ENCODE measurements at regions of chr15 and their contacts with region 1.

Region 1: DNA sequence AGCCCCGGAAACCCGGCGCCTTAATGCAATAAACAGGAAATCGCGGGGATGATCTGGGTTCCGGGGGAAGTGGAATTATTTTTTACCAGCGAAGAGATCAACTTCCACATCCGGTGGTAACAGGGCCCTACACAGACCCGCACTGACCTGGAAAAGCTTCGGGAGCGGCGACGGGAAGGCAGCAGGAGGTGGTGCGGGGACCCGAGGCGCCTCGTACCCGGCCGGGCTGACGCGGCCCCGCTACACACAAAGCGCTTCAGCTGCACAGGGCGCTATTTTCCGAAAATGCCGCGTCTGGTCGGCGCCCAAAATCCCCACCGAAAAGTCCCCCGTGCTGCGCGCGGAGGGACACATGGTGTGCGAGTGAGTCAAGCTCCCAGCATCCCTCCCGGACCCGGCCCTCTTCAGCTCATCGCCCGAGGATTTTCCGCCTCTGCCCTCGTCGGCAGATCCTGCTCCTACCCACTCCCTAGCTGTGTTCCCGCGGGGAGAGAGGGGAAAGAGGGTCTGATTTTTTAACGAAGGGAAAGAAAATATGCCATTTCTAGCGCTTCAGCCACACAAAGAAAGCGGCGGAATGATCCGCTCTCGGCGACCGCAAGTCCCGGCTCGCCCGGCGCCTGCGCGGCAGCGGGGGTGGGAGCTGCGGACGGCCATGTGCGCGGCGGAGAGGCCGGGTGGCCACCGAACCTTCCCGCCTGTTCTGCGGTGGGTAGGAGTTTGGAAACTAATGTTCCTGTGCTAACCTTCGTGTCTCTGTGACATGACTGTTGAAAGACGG is at the start of gene GABPB1:
- DNase-seq: peak; percentile 90
- H3K4me3 Mint-ChIP-seq: peak within 1 kb of the TSS; percentile 94
- H3K27ac Mint-ChIP-seq: peak within 1 kb of the TSS; percentile 98
- H3K4me1 Mint-ChIP-seq: peaks cover 28% of the 10 kb centered on the region
- H3K27me3 Mint-ChIP-seq: no peaks in the 10 kb centered on the region
- CTCF ChIP-seq: no peak
- total RNA-seq, gene GABPB1: 33.4 and 38.5 TPM in 2 replicates

Region 2: GRCh38 chr15:50315814-50316630 is 39.0 kb before region 1 on chr15:
- CTCF ChIA-PET with region 1: no interaction called
- POLR2A ChIA-PET with region 1: interaction called, 10 read pairs
- intact Hi-C with region 1: no loop called
- DNase-seq: peak; percentile 58
- H3K4me3 Mint-ChIP-seq: no peak overlapping the region
- H3K27ac Mint-ChIP-seq: no peak overlapping the region
- H3K4me1 Mint-ChIP-seq: no peaks in the 10 kb centered on the region
- H3K27me3 Mint-ChIP-seq: no peaks in the 10 kb centered on the region
- CTCF ChIP-seq: peak; percentile 59

Region 3: DNA sequence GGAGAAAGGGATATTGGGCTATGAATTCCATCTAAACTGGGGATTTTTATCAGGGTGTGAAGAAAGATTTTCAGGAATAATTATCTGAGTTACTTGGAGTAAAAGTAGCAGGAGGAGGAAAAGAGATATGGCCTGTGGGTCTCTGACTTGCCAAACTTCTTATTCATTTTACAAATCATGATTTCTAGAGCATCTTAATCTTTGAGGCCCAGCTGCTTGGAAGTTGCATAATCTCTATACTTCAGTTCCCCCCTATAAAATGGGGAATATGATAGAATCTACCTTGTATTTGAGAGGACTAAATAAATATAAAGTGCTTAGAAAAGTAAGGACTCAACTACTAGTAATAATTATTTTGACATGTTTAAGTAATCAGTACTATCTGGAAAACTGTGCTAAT is 10.9 kb after region 1 on chr15:
- CTCF ChIA-PET with region 1: no interaction called
- POLR2A ChIA-PET with region 1: interaction called, 11 read pairs
- intact Hi-C with region 1: no loop called
- DNase-seq: no peak
- H3K4me3 Mint-ChIP-seq: no peak overlapping the region
- H3K27ac Mint-ChIP-seq: no peak overlapping the region
- H3K4me1 Mint-ChIP-seq: peaks cover 6% of the 10 kb centered on the region
- H3K27me3 Mint-ChIP-seq: no peaks in the 10 kb centered on the region
- CTCF ChIP-seq: no peak

Region 4: GRCh38 chr15:50418041-50418583 is 63.1 kb after region 1 on chr15:
- CTCF ChIA-PET with region 1: interaction called, 5 read pairs
- POLR2A ChIA-PET with region 1: interaction called, 142 read pairs
- intact Hi-C with region 1: no loop called
- DNase-seq: no peak
- H3K4me3 Mint-ChIP-seq: no peak overlapping the region
- H3K27ac Mint-ChIP-seq: no peak overlapping the region
- H3K4me1 Mint-ChIP-seq: no peaks in the 10 kb centered on the region
- H3K27me3 Mint-ChIP-seq: no peaks in the 10 kb centered on the region
- CTCF ChIP-seq: no peak

Region 5: GRCh38 chr15:50908210-50909009 is 553.4 kb after region 1 on chr15 and contains the start of gene AP4E1:
- CTCF ChIA-PET with region 1: interaction called, 5 read pairs
- POLR2A ChIA-PET with region 1: interaction called, 10 read pairs
- intact Hi-C with region 1: loop called (anchors 2 kb)
- DNase-seq: peak; percentile 91
- H3K4me3 Mint-ChIP-seq: peak within 1 kb of the TSS; percentile 81
- H3K27ac Mint-ChIP-seq: peak within 1 kb of the TSS; percentile 81
- H3K4me1 Mint-ChIP-seq: no peaks in the 10 kb centered on the region
- H3K27me3 Mint-ChIP-seq: no peaks in the 10 kb centered on the region
- CTCF ChIP-seq: peak; percentile 97
- total RNA-seq, gene AP4E1: 25.5 and 28.2 TPM in 2 replicates

Measured in MCF 10A (cell line).